ENCODE measurements at regions of chr14 and their contacts with region 1.

Region 1: DNA sequence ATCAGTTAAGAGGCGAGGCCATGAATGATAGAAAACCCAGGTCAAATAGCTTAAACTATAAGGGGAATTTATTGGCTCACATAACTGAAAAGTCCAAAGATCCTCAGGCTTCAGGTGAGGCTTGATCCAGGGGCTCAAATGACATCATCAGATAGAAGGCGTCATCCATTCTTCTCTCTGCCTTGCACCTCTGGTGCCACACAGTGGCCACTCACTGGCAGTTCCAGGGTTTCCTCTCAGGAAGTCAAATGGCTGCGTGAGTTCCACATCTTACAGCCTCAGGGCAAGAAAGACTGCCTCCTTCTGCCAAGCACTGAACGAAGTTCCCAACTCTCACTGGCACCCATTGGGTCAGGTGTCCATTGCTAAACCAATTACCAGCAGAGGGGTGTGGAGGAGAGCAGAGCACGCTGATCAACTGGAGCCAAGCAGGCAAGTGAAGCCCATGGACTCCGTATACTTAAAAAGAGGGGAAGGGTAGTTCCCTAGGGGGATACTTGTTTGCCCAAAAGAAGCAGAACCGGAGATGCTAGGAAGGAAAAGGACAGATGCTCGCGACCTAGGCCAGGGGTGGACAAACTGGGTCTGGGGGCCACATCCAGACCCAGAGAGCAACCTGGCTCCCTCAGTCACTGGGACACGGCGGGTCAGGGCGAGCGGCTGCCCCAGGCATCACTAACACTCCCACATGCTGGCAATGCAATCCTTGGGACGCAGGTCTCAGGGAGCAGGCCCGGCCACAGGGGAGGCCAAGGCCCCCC is 69.3 kb downstream of the SERPINA3 start:
- DNase-seq: peak; percentile 42
- ATAC-seq: peak; percentile 64
- H3K4me3 ChIP-seq: no peak overlapping the region
- H3K27ac ChIP-seq: no peak overlapping the region
- H3K4me1 ChIP-seq: no peaks in the 10 kb centered on the region
- H3K27me3 ChIP-seq: peaks cover 2% of the 10 kb centered on the region
- CTCF ChIP-seq: peak; percentile 65
- POLR2A ChIP-seq: no peak
- RAD21 ChIP-seq: peak; percentile 77

Region 2: GRCh38 chr14:94423453-94424056 is 257.9 kb before region 1 on chr14:
- CTCF ChIA-PET with region 1: interaction called, 3 read pairs
- POLR2A ChIA-PET with region 1: no interaction called
- dilution Hi-C with region 1: no loop called
- in situ Hi-C with region 1: no loop called
- intact Hi-C with region 1: loop called (anchors 2 kb)
- DNase-seq: peak; percentile 59
- ATAC-seq: peak; percentile 83
- H3K4me3 ChIP-seq: no peak overlapping the region
- H3K27ac ChIP-seq: no peak overlapping the region
- H3K4me1 ChIP-seq: no peaks in the 10 kb centered on the region
- H3K27me3 ChIP-seq: peaks cover 11% of the 10 kb centered on the region
- CTCF ChIP-seq: peak; percentile 66
- POLR2A ChIP-seq: no peak
- RAD21 ChIP-seq: peak; percentile 48

Region 3: GRCh38 chr14:94548999-94549985 is 132.2 kb before region 1 on chr14:
- CTCF ChIA-PET with region 1: no interaction called
- POLR2A ChIA-PET with region 1: no interaction called
- dilution Hi-C with region 1: no loop called
- in situ Hi-C with region 1: no loop called
- intact Hi-C with region 1: loop called (anchors 1 kb)
- DNase-seq: peak; percentile 36
- ATAC-seq: peak; percentile 96
- H3K4me3 ChIP-seq: no peak overlapping the region
- H3K27ac ChIP-seq: no peak overlapping the region
- H3K4me1 ChIP-seq: no peaks in the 10 kb centered on the region
- H3K27me3 ChIP-seq: no peaks in the 10 kb centered on the region
- CTCF ChIP-seq: peak; percentile 69
- POLR2A ChIP-seq: no peak
- RAD21 ChIP-seq: peak; percentile 54

Region 4: GRCh38 chr14:94636522-94637412 is 44.7 kb before region 1 on chr14:
- CTCF ChIA-PET with region 1: no interaction called
- POLR2A ChIA-PET with region 1: no interaction called
- dilution Hi-C with region 1: no loop called
- in situ Hi-C with region 1: no loop called
- intact Hi-C with region 1: loop called (anchors 1 kb)
- DNase-seq: no peak
- ATAC-seq: no peak
- H3K4me3 ChIP-seq: no peak overlapping the region
- H3K27ac ChIP-seq: no peak overlapping the region
- H3K4me1 ChIP-seq: no peaks in the 10 kb centered on the region
- H3K27me3 ChIP-seq: peaks cover 5% of the 10 kb centered on the region; the same call in 1 of the 2 replicates
- CTCF ChIP-seq: 0 out of 2 replicates have a peak, but pooled peaks have one; percentile 13
- POLR2A ChIP-seq: no peak
- RAD21 ChIP-seq: no peak